K562 (cell line): ENCODE measurements at regions of chr21 and their contacts with region 1.

Region 1: DNA sequence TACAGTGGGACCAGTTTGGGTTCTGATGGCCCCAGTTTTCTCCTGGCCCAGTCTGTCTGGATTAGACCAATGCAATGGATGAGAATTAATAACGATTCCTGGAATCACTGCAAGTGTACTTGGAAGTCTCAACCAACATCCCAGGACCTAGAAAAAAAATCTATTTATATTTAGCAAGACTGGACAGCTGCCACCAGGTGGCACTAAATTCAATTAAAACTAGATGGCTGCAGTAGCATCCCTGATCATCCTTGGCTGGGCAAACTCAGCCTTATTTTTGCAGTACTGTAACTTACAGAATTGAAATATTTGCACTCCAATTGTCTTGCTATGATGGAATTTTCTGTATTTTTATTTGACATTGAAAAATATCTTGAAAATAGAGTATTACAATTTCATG is 165.7 kb downstream of the NCAM2 start:
- DNase-seq: peak; percentile 44 to 85 (median 52)
- ATAC-seq: peak; percentile 71
- H3K4me3 ChIP-seq: no peak overlapping the region
- H3K27ac ChIP-seq: peak overlapping the region; percentile 71; the same call in 1 of the 3 replicates
- H3K4me1 ChIP-seq: peaks cover 7 to 10% of the 10 kb centered on the region in 2 experiments; a peak in 4 of 5 replicates
- H3K27me3 ChIP-seq: no peaks in the 10 kb centered on the region
- CTCF ChIP-seq: peak; percentile 58 to 75 (median 72)
- EP300 ChIP-seq: no peak
- POLR2A ChIP-seq: no peak
- RAD21 ChIP-seq: peak; percentile 69 to 73

Region 2: DNA sequence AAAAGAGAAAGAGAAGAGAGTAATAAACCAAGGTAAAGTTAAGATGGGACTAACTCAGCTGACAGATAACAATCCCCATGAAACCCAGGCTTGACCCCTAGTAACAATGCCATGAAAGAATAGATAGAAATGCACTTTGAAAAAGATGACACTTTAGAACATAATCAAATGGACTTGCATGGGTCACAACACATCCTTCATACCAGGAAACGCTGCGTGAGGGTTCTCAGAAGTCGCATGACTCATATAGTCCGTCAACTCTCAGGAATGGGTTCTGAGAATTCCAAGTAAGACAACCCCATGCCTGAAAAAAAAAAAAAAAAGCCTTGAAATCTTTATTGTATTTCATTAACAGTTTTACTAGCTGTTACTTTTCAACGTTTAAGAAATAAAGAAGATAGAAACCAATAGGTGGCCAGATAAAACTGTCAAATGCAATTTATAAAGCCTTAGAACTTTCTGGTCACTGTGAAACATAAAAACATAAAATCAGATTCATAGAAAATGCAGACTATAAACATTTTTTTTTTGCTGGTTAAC is 36.3 kb after region 1 on chr21:
- CTCF ChIA-PET with region 1: no interaction called
- POLR2A ChIA-PET with region 1: no interaction called
- in situ Hi-C with region 1: no loop called
- intact Hi-C with region 1: loop called (anchors 5 kb)
- DNase-seq: peak; percentile 47 to 96 (median 64)
- ATAC-seq: peak; percentile 74
- H3K4me3 ChIP-seq: peak overlapping the region; percentile 1; the same call in 1 of the 2 replicates
- H3K27ac ChIP-seq: peak overlapping the region; percentile 90
- H3K4me1 ChIP-seq: peaks cover 24 to 52% of the 10 kb centered on the region in 2 experiments
- H3K27me3 ChIP-seq: no peaks in the 10 kb centered on the region
- CTCF ChIP-seq: 0 out of 6 replicates have a peak, but pooled peaks of 1 of the 3 experiments have one; percentile 2
- EP300 ChIP-seq: peak; percentile 86
- POLR2A ChIP-seq: peak; percentile 28; the same call in 1 of the 2 replicates
- RAD21 ChIP-seq: no peak

Region 3: DNA sequence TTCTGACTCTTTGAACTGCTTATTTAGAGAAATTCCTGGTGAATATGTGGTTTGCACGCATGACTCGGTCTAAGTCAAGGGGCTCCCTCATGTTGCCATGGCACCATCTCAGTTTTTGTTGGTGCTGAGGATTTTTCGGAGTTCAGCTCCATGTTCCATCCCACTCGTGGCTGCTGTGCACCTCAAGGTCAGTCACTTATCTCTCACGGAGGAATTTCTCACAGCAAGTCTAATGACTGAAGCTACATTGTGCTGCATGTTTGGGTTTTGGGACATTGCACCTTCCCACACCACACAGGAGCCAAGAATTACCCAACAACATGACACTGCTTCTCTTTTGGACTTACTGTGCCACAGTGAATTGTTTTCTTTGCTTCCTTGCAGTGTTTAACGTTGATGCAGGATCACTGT is 104.2 kb after region 1 on chr21:
- CTCF ChIA-PET with region 1: no interaction called
- POLR2A ChIA-PET with region 1: no interaction called
- in situ Hi-C with region 1: no loop called
- intact Hi-C with region 1: no loop called
- DNase-seq: peak in 1 of 4 experiments; percentile 4
- ATAC-seq: peak; percentile 54
- H3K4me3 ChIP-seq: no peak overlapping the region
- H3K27ac ChIP-seq: peak overlapping the region; percentile 10; the same call in 1 of the 3 replicates
- H3K4me1 ChIP-seq: no peaks in the 10 kb centered on the region; a peak in 1 of 5 replicates
- H3K27me3 ChIP-seq: no peaks in the 10 kb centered on the region
- CTCF ChIP-seq: no peak
- EP300 ChIP-seq: no peak
- POLR2A ChIP-seq: no peak
- RAD21 ChIP-seq: no peak

Region 4: DNA sequence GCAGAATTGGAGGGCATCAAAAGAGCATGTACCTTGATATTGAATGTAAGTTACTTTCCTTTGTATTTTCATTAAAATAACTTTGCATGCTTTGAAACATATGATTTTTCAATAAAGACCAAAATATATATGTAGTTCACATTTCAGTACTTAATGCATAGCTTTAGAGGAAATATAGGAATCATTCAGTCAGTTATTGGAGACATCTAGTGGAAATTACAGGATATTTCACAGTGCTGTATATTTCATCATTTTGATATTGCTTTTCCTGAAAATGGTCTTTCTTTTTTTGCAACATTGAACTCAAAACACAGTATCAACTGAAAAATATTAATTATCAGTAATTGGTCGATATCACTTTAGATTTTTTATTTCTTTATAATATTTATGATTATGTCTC is 210.1 kb after region 1 on chr21:
- CTCF ChIA-PET with region 1: interaction called, 8 read pairs
- POLR2A ChIA-PET with region 1: no interaction called
- in situ Hi-C with region 1: no loop called
- intact Hi-C with region 1: loop called (anchors 1 kb)
- DNase-seq: no peak
- ATAC-seq: peak; percentile 67
- H3K4me3 ChIP-seq: no peak overlapping the region
- H3K27ac ChIP-seq: no peak overlapping the region; the same call in 2 of the 3 replicates
- H3K4me1 ChIP-seq: no peaks in the 10 kb centered on the region
- H3K27me3 ChIP-seq: no peaks in the 10 kb centered on the region
- CTCF ChIP-seq: peak in 2 of 3 experiments; percentile 4 to 49; a peak in 3 of 6 replicates
- EP300 ChIP-seq: no peak
- POLR2A ChIP-seq: no peak
- RAD21 ChIP-seq: no peak; a peak in 2 of 4 replicates

Region 5: DNA sequence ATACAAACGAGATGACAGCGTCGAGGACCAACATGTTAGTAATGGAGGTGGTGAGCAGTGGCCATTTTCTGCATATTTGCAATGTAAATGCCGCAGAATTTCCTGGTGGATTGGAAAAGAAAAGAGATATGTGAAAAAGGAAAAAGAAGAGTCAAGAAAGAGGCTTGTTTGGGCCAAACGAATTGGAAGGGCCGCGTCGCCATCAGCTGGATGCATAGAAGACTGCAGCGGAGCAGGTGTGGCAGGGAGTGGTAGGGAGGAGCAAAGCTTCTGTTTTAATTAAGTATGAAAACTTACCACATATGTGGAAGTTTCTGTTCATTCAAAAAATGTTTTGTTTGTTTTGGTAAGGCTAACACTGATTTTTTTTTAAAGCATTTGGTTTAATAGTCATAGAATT is 525.0 kb after region 1 on chr21:
- CTCF ChIA-PET with region 1: no interaction called
- POLR2A ChIA-PET with region 1: no interaction called
- in situ Hi-C with region 1: no loop called
- intact Hi-C with region 1: loop called (anchors 5 kb)
- DNase-seq: peak in 2 of 4 experiments; percentile 5 to 23
- ATAC-seq: peak; percentile 78
- H3K4me3 ChIP-seq: no peak overlapping the region
- H3K27ac ChIP-seq: no peak overlapping the region
- H3K4me1 ChIP-seq: no peaks in the 10 kb centered on the region
- H3K27me3 ChIP-seq: no peaks in the 10 kb centered on the region
- CTCF ChIP-seq: peak; percentile 27 to 48 (median 30); a peak in 3 of 6 replicates
- EP300 ChIP-seq: no peak
- POLR2A ChIP-seq: no peak
- RAD21 ChIP-seq: peak; percentile 44 to 55